Activated CD4-positive, alpha-beta T cell treated with anti-CD3 and anti-CD28 coated beads for 36 hours (primary cell): ENCODE measurements at regions of chr17 and their contacts with region 1.

Region 1: GRCh38 chr17:32693194-32693897 is 183.6 kb downstream of the MYO1D start:
- DNase-seq: no peak
- ATAC-seq: no peak
- H3K4me3 Mint-ChIP-seq: no peak overlapping the region
- H3K27ac Mint-ChIP-seq: no peak overlapping the region
- H3K4me1 Mint-ChIP-seq: peaks cover 4% of the 10 kb centered on the region
- H3K27me3 Mint-ChIP-seq: peaks cover 4% of the 10 kb centered on the region

Region 2: DNA sequence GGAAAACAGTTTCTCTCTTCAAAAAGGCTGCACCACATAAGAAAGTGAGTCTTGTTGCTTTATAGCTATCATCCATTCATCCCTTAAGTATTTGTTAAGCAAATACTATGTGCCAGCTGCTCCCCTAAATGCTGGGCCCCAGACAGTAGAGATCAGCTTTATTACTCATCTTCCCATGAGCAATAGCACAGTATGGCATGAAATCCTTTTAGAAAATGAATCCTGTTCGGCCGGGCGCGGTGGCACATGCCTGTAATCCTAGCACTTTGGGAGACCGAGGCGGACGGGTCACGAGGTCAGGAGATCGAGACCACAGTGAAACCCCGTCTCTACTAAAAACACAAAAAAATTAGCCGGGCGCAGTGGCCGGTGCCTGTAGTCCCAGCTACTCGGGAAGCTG is 84.1 kb after region 1 on chr17:
- CTCF ChIA-PET with region 1: no interaction called
- POLR2A ChIA-PET with region 1: no interaction called
- intact Hi-C with region 1: no loop called
- DNase-seq: no peak
- ATAC-seq: no peak
- H3K4me3 Mint-ChIP-seq: no peak overlapping the region
- H3K27ac Mint-ChIP-seq: no peak overlapping the region
- H3K4me1 Mint-ChIP-seq: no peaks in the 10 kb centered on the region
- H3K27me3 Mint-ChIP-seq: no peaks in the 10 kb centered on the region

Region 3: DNA sequence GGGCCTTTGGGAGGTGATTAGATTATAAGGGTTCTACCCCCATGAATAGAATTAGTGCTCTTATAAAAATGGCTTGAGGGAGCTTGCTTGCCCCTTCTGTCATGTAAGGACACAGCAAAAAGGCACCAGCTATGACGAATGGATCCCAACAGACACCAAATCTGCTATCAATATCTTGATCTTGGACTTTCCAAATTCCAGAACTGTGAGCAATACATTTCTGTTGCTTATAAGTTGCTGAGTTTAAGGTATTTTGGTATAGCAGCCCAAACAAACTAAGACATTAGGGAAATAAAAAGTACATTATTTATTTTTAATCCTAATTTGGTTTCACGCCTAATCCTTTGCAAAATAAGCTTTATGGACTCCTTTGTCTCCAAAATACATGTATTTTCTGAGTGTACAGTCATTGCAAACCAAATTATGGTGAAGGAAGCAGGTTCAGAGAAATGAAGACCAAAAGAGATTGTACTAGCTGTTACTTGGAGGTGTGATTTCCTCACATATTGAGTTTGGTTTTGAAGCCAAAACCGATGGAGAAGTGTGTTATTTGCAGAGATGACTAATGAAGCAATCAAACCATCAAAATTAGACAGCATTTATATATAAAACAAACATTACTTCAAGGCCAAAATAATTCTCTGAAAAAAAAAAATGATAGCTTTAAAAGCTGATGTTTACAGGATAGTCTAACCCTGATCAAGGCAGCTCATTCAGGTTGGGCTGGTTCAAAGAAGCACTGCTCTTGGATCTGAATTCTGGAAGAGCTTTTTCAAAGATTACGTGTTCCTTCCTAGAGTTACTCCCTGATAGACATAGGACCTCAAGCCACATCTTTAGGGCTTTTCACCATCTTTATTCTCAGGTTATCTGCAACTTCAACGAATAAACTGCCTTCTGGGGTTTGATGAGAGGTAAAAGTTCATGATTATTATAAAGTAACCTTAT is 112.0 kb after region 1 on chr17:
- CTCF ChIA-PET with region 1: no interaction called
- POLR2A ChIA-PET with region 1: no interaction called
- intact Hi-C with region 1: no loop called
- DNase-seq: no peak
- ATAC-seq: no peak
- H3K4me3 Mint-ChIP-seq: no peak overlapping the region
- H3K27ac Mint-ChIP-seq: no peak overlapping the region
- H3K4me1 Mint-ChIP-seq: peaks cover 4% of the 10 kb centered on the region
- H3K27me3 Mint-ChIP-seq: no peaks in the 10 kb centered on the region

Region 4: GRCh38 chr17:32971171-32971570 is 277.8 kb after region 1 on chr17:
- CTCF ChIA-PET with region 1: no interaction called
- POLR2A ChIA-PET with region 1: no interaction called
- intact Hi-C with region 1: no loop called
- DNase-seq: peak; percentile 53
- ATAC-seq: peak; percentile 86
- H3K4me3 Mint-ChIP-seq: no peak overlapping the region
- H3K27ac Mint-ChIP-seq: no peak overlapping the region
- H3K4me1 Mint-ChIP-seq: peaks cover 5% of the 10 kb centered on the region
- H3K27me3 Mint-ChIP-seq: peaks cover 4% of the 10 kb centered on the region

Region 5: GRCh38 chr17:34673995-34674870 is 1980.9 kb after region 1 on chr17:
- CTCF ChIA-PET with region 1: no interaction called
- POLR2A ChIA-PET with region 1: no interaction called
- intact Hi-C with region 1: loop called in 1 of 2 experiments (anchors 10 kb)
- DNase-seq: no peak
- ATAC-seq: no peak
- H3K4me3 Mint-ChIP-seq: no peak overlapping the region
- H3K27ac Mint-ChIP-seq: no peak overlapping the region
- H3K4me1 Mint-ChIP-seq: no peaks in the 10 kb centered on the region
- H3K27me3 Mint-ChIP-seq: peaks cover 5% of the 10 kb centered on the region